IMR-90 (cell line): ENCODE measurements at regions of chr5 and their contacts with region 1.

Region 1: GRCh38 chr5:127243011-127243410 is 47.6 kb upstream of the MEGF10 start:
- DNase-seq: no peak
- ATAC-seq: no peak
- H3K4me3 ChIP-seq: no peak overlapping the region
- H3K27ac ChIP-seq: no peak overlapping the region
- H3K4me1 ChIP-seq: no peaks in the 10 kb centered on the region
- H3K27me3 ChIP-seq: peaks cover 5% of the 10 kb centered on the region
- CTCF ChIP-seq: no peak
- POLR2A ChIP-seq: no peak
- RAD21 ChIP-seq: no peak

Region 2: DNA sequence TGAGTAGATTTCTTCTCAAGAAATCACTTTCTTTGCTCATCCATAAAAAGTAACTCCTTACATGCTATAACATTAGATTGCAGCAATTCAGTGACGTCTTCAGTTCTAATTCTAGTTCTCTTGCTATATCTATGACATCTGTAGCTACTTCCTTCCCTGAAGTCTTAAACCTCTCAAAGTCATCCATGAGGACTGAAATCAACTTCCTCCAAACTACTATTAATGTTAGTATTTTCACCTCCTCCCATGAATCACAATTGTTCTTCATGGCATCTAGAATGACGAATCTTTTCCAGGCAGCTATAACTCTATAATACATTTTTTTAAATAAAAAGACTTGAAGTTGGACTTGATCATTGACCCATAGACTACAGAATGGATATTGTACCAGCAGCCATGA is 228.2 kb after region 1 on chr5:
- CTCF ChIA-PET with region 1: no interaction called
- POLR2A ChIA-PET with region 1: no interaction called
- dilution Hi-C with region 1: no loop called
- in situ Hi-C with region 1: no loop called
- intact Hi-C with region 1: no loop called
- DNase-seq: no peak
- ATAC-seq: no peak
- H3K4me3 ChIP-seq: no peak overlapping the region
- H3K27ac ChIP-seq: no peak overlapping the region
- H3K4me1 ChIP-seq: no peaks in the 10 kb centered on the region
- H3K27me3 ChIP-seq: peaks cover 3% of the 10 kb centered on the region; the same call in 1 of the 2 replicates
- CTCF ChIP-seq: no peak
- POLR2A ChIP-seq: no peak
- RAD21 ChIP-seq: no peak

Region 3: DNA sequence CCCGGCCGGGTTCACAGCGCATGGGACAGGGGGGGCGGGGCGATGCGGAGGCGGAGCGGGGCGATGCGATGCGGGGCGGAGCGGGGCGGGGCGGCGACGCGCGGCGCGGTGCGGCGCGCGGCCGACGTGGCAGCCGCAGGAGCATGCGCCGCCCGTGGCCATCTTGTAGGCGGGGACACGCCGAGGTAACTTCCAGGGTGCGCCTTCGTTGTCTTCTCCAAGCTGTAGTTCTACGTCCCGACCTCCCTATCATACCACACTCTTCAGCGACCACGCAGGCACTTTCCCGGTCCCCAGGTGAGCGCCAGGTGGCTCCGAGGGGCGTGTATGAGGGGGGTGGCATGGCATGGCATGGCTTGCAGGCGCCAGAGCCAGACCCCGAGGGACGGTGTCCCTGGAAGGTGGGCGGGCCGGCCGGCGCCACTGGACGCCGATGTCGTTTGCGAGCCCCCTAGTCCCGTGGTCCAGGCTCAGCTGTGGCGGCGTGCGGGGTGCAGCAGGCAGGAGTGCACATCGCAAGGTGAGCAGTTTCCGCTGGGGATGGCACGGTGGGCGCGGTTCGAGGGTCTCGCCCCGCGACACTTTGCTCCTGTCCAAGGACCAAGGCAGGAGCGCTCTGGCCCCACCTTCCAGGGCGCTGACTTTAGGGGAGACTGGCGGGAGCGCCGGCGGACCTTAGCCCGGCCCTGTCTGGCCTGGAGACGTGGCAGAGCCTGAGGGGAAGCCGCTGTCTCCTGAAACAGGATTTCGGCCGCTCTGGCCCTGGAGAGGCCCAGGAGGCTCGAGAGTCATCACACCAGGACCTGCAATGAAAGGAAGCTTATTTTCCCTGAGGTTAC is 274.7 kb after region 1 on chr5 and contains the start of gene PRRC1:
- CTCF ChIA-PET with region 1: no interaction called
- POLR2A ChIA-PET with region 1: interaction called, 10 read pairs
- dilution Hi-C with region 1: no loop called
- in situ Hi-C with region 1: no loop called
- intact Hi-C with region 1: no loop called
- DNase-seq: peak; percentile 81
- ATAC-seq: peak; percentile 97
- H3K4me3 ChIP-seq: peak within 1 kb of the TSS; percentile 99
- H3K27ac ChIP-seq: peak within 1 kb of the TSS; percentile 96
- H3K4me1 ChIP-seq: peaks cover 3% of the 10 kb centered on the region; the same call in 1 of the 2 replicates
- H3K27me3 ChIP-seq: peaks cover 5% of the 10 kb centered on the region
- CTCF ChIP-seq: no peak
- POLR2A ChIP-seq: peak; percentile 73; the same call in 1 of the 2 replicates
- RAD21 ChIP-seq: no peak
- total RNA-seq, gene PRRC1: 46.8 and 49.4 TPM in 2 replicates